AG04450 (cell line): ENCODE measurements at regions of chr19 and their contacts with region 1.

Region 1: DNA sequence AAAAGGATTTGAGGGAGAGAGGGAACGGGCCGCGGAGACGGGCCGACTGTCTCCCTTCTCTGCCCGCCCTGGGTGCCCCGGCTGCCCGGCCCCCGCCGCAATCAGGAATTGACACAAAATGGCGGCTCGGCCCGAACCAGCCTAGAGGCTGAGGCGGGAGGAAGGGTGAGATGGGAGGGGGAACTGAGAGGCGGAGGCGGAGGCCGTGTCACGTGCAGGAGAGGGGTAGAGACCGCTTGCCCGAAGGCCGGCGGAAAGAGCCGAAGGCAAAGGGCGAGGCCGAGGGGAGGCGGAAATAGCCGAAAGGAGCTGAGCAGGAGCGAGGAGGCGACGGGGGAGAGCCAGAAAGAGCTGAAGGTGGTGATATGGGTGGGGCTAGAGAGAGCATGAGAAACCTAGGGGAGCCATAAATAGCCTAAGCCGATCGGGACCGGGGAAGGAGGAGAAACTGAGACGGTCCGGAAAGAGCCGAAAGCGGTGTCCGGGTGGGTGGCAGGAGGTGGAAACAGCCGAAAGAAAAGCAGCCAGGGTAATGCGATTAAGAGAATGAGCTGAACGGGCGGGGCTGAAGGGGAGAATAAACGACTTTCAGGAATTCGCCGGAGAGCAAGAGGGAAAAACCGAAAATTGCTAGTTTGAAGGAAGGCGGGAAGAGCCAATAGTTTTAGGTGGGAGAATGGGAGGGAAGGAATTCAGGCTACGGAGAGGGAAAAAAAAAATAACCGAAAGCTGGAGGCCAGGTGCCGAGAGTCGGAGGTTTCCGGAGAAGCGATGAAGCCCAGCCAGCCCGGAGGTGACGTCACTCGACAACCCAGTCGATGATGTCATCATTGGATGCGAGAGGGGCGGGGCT is at the start of gene ZC3H4:
- DNase-seq: peak; percentile 99
- H3K4me3 ChIP-seq: peak within 1 kb of the TSS; percentile 96
- H3K27ac ChIP-seq: peak within 1 kb of the TSS; percentile 100
- H3K27me3 ChIP-seq: no peaks in the 10 kb centered on the region
- CTCF ChIP-seq: no peak
- polyA plus RNA-seq, gene ZC3H4: 4.9 and 7.3 TPM in 2 replicates

Region 2: DNA sequence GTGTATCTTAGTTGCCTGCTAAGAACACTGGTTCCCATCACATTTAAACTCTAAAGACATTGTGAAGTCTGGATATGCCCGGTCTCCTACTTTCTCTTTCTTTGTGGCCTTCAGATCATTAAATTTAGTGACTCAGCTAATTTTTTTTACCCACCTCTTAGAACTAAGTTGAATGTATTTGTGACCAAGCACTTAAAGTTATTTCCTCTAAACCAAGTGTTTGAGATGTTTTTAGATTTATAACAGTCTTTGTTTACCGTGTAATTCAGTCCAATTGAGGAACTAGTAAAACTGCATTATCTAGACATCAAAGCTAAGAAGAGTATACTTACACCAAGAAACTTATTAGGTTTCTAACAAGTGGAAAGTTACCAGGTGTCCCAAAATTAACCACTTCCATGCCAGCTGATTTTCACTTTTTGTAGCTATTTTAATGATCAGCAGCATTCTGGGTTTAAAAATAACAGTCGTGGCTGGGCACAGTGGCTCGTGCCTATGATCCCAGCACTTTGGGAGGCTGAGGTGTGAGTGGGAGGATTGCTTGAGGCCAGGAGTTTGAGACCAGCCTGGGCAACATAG is 199.3 kb before region 1 on chr19:
- CTCF ChIA-PET with region 1: no interaction called
- POLR2A ChIA-PET with region 1: no interaction called
- DNase-seq: no peak
- H3K4me3 ChIP-seq: no peak overlapping the region
- H3K27ac ChIP-seq: peak overlapping the region; percentile 25
- H3K27me3 ChIP-seq: no peaks in the 10 kb centered on the region
- CTCF ChIP-seq: no peak

Region 3: DNA sequence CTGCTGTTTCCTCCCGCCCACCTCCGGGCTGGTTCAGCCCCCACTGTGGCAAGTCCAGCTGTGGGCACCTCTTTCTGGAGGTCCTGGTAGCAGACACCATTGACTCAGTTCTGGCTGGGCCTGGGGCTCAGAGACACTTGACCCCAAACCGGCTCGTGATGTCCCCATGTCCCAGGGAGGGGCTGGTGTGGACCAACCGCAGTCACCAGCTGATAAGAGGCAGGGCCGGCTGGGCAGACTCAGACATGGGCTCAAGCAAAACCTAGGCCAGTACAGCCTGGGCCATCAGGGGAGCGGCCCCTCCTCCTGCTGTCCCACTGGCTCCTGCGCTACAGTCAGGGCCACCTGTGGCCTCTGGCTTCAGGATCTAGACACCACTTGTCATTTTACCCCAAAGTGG is 45.0 kb before region 1 on chr19:
- CTCF ChIA-PET with region 1: no interaction called
- POLR2A ChIA-PET with region 1: interaction called, 11 read pairs
- DNase-seq: no peak
- H3K4me3 ChIP-seq: no peak overlapping the region
- H3K27ac ChIP-seq: no peak overlapping the region
- H3K27me3 ChIP-seq: no peaks in the 10 kb centered on the region
- CTCF ChIP-seq: no peak

Region 4: GRCh38 chr19:47075179-47075810 is 37.9 kb before region 1 on chr19:
- CTCF ChIA-PET with region 1: interaction called, 11 read pairs
- POLR2A ChIA-PET with region 1: no interaction called
- DNase-seq: no peak
- H3K4me3 ChIP-seq: no peak overlapping the region
- H3K27ac ChIP-seq: no peak overlapping the region
- H3K27me3 ChIP-seq: no peaks in the 10 kb centered on the region
- CTCF ChIP-seq: no peak

Region 5: GRCh38 chr19:47124937-47125668 is 11.9 kb after region 1 on chr19:
- CTCF ChIA-PET with region 1: interaction called, 15 read pairs
- POLR2A ChIA-PET with region 1: interaction called, 17 read pairs
- DNase-seq: no peak
- H3K4me3 ChIP-seq: no peak overlapping the region
- H3K27ac ChIP-seq: no peak overlapping the region
- H3K27me3 ChIP-seq: no peaks in the 10 kb centered on the region
- CTCF ChIP-seq: peak; percentile 76

Region 6: DNA sequence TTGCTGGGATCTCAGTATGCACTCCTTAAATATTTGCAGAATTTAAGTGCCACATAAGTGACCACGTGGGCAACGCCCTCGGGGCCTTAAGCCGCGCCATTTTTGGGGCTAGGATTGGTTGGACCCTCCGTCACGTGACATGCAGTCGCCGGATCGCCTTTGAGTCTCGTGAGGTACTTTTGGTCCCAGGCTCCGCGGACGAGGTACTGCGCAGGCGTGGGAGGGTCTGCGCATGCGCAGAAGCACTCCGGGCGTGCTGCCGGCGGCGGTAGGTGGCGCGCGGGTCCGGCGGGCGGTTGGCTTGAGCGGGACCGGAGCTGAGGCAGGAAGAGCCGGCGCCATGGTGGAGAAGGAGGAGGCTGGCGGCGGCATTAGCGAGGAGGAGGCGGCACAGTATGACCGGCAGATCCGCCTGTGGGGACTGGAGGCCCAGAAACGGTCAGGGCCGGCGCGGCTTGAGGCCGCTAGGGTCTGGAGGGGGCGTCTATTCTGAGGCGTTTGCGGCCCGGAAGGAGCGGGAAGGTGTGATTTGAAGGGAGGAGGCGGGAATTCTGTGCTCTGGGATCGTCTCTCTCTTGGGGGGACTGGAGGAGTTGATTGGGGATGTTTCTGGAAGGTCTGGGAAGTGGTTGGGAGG is 17.5 kb after region 1 on chr19 and contains the start of gene SAE1:
- CTCF ChIA-PET with region 1: interaction called, 15 read pairs
- POLR2A ChIA-PET with region 1: interaction called, 20 read pairs
- DNase-seq: peak; percentile 98
- H3K4me3 ChIP-seq: peak within 1 kb of the TSS; percentile 92
- H3K27ac ChIP-seq: peak within 1 kb of the TSS; percentile 81
- H3K27me3 ChIP-seq: no peaks in the 10 kb centered on the region
- CTCF ChIP-seq: peak; percentile 59
- polyA plus RNA-seq, gene SAE1: 142 and 165 TPM in 2 replicates

Region 7: GRCh38 chr19:47225746-47226425 is 112.7 kb after region 1 on chr19:
- CTCF ChIA-PET with region 1: no interaction called
- POLR2A ChIA-PET with region 1: interaction called, 12 read pairs
- DNase-seq: peak; percentile 59
- H3K4me3 ChIP-seq: peak overlapping the region; percentile 98
- H3K27ac ChIP-seq: peak overlapping the region; percentile 77
- H3K27me3 ChIP-seq: no peaks in the 10 kb centered on the region
- CTCF ChIP-seq: no peak; the same call in none of the 2 replicates

Region 8: DNA sequence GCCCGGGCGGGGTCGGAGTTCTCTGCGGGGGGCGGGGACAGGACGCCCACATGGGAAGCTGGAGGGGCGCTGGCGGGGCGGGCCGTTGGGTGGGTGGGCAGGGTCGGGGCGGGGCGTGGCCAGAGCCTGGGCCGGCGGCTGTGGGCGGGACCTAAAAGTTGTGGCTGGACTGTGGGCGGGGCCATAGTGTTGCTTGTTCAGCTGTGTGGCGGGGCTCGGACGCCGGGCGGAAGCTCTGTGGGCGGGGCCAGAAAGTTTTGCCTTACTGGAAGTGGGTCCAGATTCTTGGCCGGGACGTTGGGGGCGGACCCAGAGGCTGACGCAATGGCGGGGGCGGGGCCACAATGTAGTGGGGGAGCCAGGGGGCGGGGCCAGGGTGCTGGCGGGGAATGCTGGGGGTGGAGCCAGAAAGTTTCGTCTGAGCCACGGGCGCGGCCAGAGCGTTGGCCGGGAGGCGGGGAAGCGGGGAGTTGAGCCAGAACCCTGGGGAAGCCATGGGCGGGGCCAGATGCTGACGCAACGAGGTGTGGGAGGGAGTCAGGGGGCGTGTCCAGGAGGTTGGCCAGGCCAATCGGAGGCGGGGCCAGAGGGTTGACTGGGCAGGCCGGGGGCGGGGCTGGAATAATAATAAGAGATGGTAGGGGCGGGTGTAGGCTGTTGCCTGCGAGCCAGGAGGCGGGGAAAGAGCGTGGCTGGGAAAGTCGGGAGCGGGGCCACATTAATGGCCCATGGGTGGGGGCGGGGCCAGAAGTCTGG is 143.6 kb after region 1 on chr19:
- CTCF ChIA-PET with region 1: no interaction called
- POLR2A ChIA-PET with region 1: interaction called, 15 read pairs
- DNase-seq: peak; percentile 99
- H3K4me3 ChIP-seq: peak overlapping the region; percentile 75
- H3K27ac ChIP-seq: peak overlapping the region; percentile 96
- H3K27me3 ChIP-seq: no peaks in the 10 kb centered on the region
- CTCF ChIP-seq: no peak

Region 9: GRCh38 chr19:47280183-47280797 is 167.1 kb after region 1 on chr19:
- CTCF ChIA-PET with region 1: no interaction called
- POLR2A ChIA-PET with region 1: no interaction called
- DNase-seq: no peak
- H3K4me3 ChIP-seq: no peak overlapping the region
- H3K27ac ChIP-seq: no peak overlapping the region
- H3K27me3 ChIP-seq: no peaks in the 10 kb centered on the region
- CTCF ChIP-seq: peak; percentile 49